ENCODE measurements at regions of chr1 and their contacts with region 1.

Region 1: DNA sequence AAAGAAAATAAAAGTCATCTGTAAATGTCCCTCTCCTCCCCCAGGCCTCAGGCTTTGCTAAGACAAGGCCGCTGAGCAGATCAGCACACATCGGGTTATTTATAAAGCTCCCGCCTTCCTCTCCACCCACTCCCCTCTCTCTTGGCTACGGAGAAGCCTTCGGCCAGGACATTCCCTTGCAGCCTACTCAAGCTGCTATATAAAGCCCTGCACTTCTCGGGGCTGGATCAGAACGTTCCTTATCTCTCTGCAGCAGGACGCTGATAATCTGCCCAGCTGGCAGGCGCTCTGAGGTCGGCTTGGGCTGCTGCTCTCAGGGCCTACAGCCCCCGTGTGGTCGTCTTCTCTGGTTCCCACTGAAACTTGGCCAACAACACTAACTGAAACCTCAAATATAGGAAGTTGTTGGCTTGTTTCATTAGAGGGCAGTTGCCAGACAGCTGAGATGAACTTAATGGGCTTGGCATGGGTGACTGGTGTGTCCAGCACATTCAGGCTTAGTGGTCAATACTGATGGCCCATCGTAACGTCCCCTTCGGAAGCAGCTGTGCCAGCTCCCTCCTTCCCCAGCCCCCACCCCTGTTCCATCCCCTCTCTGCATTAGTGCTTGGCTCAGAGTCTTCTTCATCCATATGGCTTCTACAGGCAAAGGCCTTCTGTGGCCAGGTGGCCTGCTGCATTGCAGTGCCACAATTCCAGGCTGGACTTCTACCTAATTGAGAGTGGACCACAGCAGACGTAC is 64.6 kb downstream of the IER5 start:
- DNase-seq: no peak
- ATAC-seq: no peak
- H3K4me3 Mint-ChIP-seq: no peak overlapping the region
- H3K27ac Mint-ChIP-seq: no peak overlapping the region
- H3K4me1 Mint-ChIP-seq: peaks cover 55% of the 10 kb centered on the region
- H3K27me3 Mint-ChIP-seq: peaks cover 16% of the 10 kb centered on the region

Region 2: GRCh38 chr1:181166377-181167196 is 13.5 kb after region 1 on chr1:
- CTCF ChIA-PET with region 1: interaction called, 16 read pairs
- POLR2A ChIA-PET with region 1: interaction called, 3 read pairs
- DNase-seq: peak; percentile 84
- ATAC-seq: peak; percentile 100
- H3K4me3 Mint-ChIP-seq: no peak overlapping the region
- H3K27ac Mint-ChIP-seq: peak overlapping the region; percentile 53
- H3K4me1 Mint-ChIP-seq: peaks cover 8% of the 10 kb centered on the region
- H3K27me3 Mint-ChIP-seq: peaks cover 6% of the 10 kb centered on the region

Region 3: DNA sequence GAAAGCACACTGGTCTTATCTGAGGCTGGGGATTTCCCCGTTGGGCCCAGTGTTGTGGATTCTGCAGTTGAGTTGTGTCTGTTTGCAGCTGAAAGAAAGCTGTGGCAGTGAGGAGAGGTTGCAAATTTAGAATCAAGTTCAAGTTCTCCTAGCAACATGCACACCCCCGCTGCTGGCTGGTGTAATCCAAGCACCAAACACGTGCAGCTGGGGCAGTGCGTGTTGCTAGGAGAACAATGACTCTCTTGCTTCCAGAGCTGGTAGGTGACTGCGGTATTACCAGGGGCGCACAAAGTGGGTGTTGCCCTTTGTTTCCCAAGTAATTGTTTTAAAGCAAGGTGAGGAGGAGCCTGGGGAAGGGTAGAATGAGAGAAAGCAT is 26.9 kb after region 1 on chr1:
- CTCF ChIA-PET with region 1: no interaction called
- POLR2A ChIA-PET with region 1: no interaction called
- DNase-seq: peak; percentile 38
- ATAC-seq: peak; percentile 72
- H3K4me3 Mint-ChIP-seq: no peak overlapping the region
- H3K27ac Mint-ChIP-seq: peak overlapping the region; percentile 25
- H3K4me1 Mint-ChIP-seq: peaks cover 11% of the 10 kb centered on the region
- H3K27me3 Mint-ChIP-seq: peaks cover 17% of the 10 kb centered on the region